Mammary epithelial cell (primary cell): ENCODE measurements at regions of chr11 and their contacts with region 1.

Region 1: DNA sequence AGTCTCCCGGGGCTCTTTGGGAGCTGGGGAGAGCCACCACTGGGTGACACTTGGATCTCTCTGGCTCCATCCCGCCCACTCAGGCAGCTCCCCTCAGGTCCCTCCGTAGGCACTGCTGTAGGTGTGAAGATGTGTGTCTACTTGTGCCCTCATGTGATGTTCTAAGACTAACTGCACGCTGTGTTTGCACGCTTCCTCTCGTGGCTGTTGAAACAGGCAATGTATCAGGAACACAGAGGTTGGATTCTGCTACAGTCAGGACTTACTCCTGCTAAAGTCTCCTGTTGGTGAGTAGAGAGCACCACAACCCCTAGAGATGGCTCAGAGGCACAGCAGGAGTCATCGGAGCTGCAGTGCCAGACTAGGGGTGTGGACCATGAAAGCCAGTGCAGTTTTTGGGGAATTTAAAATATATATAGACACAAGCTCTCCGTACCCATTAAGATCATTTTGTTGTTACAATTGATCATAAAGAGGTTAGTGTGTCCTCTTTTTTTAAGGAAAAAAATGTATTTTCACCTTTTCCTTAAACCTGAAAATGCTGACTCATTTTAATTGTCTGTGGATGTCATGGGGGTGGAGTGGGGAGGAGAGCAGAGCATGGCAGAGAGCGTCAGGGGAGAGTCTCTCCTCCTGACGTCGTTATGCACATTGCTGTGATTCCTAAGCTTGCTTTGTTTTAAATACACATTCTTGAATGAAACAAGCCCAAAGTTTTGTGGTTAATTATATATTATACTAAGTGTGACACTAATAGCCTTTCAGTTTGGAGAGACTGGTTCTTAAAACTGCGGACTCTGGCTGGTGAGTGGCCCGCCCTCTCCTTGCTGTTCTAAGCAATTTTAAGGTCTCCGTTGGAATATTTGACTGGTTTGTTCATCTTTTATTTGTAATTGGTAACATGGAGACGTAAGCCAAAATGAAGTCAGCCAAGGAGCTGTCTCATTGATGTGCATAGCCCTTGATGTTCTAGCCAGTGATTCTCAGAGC is 16.2 kb upstream of the CTTN start:
- DNase-seq: no peak
- H3K4me3 ChIP-seq: no peak overlapping the region
- H3K27ac ChIP-seq: no peak overlapping the region
- H3K4me1 ChIP-seq: no peaks in the 10 kb centered on the region
- H3K27me3 ChIP-seq: no peaks in the 10 kb centered on the region
- CTCF ChIP-seq: no peak

Region 2: DNA sequence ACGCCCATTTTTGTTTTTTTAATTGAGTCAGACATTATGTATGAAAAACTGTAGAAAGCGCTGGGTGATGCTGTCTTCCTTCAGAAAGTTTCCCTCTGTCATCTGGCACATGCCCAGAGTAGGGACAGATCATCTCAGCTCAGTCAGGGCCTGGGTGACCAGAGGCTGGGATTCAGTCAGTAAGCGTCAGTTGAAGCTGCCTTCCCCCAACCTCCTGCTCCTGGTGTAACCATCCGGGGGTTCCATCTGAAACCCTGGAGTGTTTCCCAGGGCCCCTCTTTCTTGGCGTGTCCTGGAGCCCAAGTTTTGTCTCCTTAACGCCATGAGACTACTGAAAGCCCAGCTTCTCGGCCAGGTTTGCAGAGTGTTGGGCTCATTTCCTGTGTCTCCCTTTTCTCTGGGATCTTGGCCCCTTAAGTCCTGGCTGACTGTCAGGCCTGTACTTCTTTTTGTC is 101.0 kb before region 1 on chr11:
- CTCF ChIA-PET with region 1: no interaction called
- dilution Hi-C with region 1: no loop called
- in situ Hi-C with region 1: no loop called
- intact Hi-C with region 1: no loop called
- DNase-seq: no peak
- H3K4me3 ChIP-seq: no peak overlapping the region
- H3K27ac ChIP-seq: no peak overlapping the region
- H3K4me1 ChIP-seq: no peaks in the 10 kb centered on the region
- H3K27me3 ChIP-seq: no peaks in the 10 kb centered on the region
- CTCF ChIP-seq: no peak

Region 3: GRCh38 chr11:70440206-70440605 is 58.0 kb after region 1 on chr11:
- CTCF ChIA-PET with region 1: no interaction called
- dilution Hi-C with region 1: loop called (anchors 5 kb)
- in situ Hi-C with region 1: no loop called
- intact Hi-C with region 1: no loop called
- DNase-seq: no peak
- H3K4me3 ChIP-seq: no peak overlapping the region
- H3K27ac ChIP-seq: no peak overlapping the region
- H3K4me1 ChIP-seq: no peaks in the 10 kb centered on the region
- H3K27me3 ChIP-seq: no peaks in the 10 kb centered on the region
- CTCF ChIP-seq: no peak